ENCODE measurements at regions of chr9 and their contacts with region 1.

Region 1: DNA sequence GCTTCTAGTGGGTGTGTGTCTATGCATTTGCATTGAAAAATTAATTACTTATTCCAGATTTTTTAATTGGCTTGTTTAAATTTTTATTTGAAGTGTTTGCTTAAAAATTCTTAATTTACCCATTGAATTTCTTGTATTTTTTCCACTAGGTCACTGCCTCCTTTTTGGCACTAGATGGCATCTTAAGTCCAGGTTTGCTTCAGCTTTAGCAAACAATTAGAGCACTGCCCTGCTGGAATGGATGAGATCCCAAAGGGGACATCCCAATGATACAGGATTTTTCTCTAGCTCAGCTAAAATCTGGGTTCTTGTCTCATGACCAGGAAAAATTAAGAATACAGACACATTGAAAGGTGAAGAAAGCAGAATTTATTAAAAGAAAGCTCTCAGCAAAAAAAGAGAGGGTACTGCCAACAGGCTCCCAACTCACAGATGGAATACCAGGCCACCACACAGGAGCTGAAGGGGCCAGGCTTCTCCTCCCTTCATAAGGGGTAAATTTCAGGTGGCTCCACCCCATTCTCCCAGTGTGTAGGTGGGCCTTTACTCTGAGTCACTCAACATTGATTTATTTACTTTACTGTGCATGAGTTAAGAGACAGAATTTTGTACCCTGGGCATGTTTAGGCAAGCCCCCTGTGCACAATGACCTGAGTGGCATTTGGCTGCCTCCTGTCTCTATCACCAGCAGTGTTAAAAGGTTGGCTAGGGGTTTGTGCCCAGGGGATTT is 532.4 kb downstream of the ANXA1 start:
- DNase-seq: peak; percentile 69
- H3K4me3 Mint-ChIP-seq: no peak overlapping the region
- H3K27ac Mint-ChIP-seq: peak overlapping the region; percentile 40
- H3K4me1 Mint-ChIP-seq: peaks cover 13% of the 10 kb centered on the region
- H3K27me3 Mint-ChIP-seq: peaks cover 32% of the 10 kb centered on the region
- CTCF ChIP-seq: peak; percentile 89

Region 2: GRCh38 chr9:74006935-74007334 is 322.9 kb after region 1 on chr9:
- CTCF ChIA-PET with region 1: no interaction called
- POLR2A ChIA-PET with region 1: no interaction called
- intact Hi-C with region 1: loop called (anchors 1 kb)
- DNase-seq: peak; percentile 8
- H3K4me3 Mint-ChIP-seq: no peak overlapping the region
- H3K27ac Mint-ChIP-seq: no peak overlapping the region
- H3K4me1 Mint-ChIP-seq: no peaks in the 10 kb centered on the region
- H3K27me3 Mint-ChIP-seq: peaks cover 21% of the 10 kb centered on the region
- CTCF ChIP-seq: no peak

Region 3: DNA sequence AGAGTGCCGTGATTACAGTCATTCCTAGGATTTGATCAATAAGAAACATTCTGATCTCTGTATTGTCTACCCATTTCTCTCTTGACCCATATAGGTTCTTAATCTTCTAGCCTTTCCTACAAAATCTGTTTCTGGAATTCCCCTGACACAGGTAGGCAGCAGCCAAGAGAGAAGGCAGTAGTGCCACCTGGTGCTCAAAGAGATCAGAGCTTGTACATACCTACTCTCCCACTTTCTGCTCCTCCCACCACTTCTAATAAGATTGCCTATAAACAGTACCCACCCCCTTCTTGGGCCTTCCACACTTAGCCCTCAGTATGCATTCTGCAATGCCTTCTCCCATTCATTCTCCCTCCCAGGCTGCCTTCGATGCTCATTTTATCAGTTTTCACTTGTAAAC is 695.7 kb after region 1 on chr9:
- CTCF ChIA-PET with region 1: interaction called, 80 read pairs
- POLR2A ChIA-PET with region 1: interaction called, 3 read pairs
- intact Hi-C with region 1: loop called (anchors 1 kb)
- DNase-seq: peak; percentile 69
- H3K4me3 Mint-ChIP-seq: no peak overlapping the region
- H3K27ac Mint-ChIP-seq: no peak overlapping the region
- H3K4me1 Mint-ChIP-seq: no peaks in the 10 kb centered on the region
- H3K27me3 Mint-ChIP-seq: peaks cover 26% of the 10 kb centered on the region
- CTCF ChIP-seq: peak; percentile 43

Region 4: GRCh38 chr9:74570879-74571512 is 887.0 kb after region 1 on chr9:
- CTCF ChIA-PET with region 1: interaction called, 16 read pairs
- POLR2A ChIA-PET with region 1: no interaction called
- intact Hi-C with region 1: loop called (anchors 1 kb)
- DNase-seq: peak; percentile 33
- H3K4me3 Mint-ChIP-seq: no peak overlapping the region
- H3K27ac Mint-ChIP-seq: no peak overlapping the region
- H3K4me1 Mint-ChIP-seq: no peaks in the 10 kb centered on the region
- H3K27me3 Mint-ChIP-seq: peaks cover 51% of the 10 kb centered on the region
- CTCF ChIP-seq: peak; percentile 68

Region 5: GRCh38 chr9:74645007-74645639 is 961.1 kb after region 1 on chr9:
- CTCF ChIA-PET with region 1: interaction called, 3 read pairs
- POLR2A ChIA-PET with region 1: no interaction called
- intact Hi-C with region 1: loop called (anchors 1 kb)
- DNase-seq: peak; percentile 33
- H3K4me3 Mint-ChIP-seq: no peak overlapping the region
- H3K27ac Mint-ChIP-seq: no peak overlapping the region
- H3K4me1 Mint-ChIP-seq: no peaks in the 10 kb centered on the region
- H3K27me3 Mint-ChIP-seq: peaks cover 83% of the 10 kb centered on the region
- CTCF ChIP-seq: peak; percentile 64

Region 6: GRCh38 chr9:74742792-74743730 is 1059.0 kb after region 1 on chr9:
- CTCF ChIA-PET with region 1: interaction called, 4 read pairs
- POLR2A ChIA-PET with region 1: no interaction called
- intact Hi-C with region 1: loop called (anchors 2 kb)
- DNase-seq: peak; percentile 41
- H3K4me3 Mint-ChIP-seq: no peak overlapping the region
- H3K27ac Mint-ChIP-seq: no peak overlapping the region
- H3K4me1 Mint-ChIP-seq: peaks cover 5% of the 10 kb centered on the region
- H3K27me3 Mint-ChIP-seq: peaks cover 64% of the 10 kb centered on the region
- CTCF ChIP-seq: peak; percentile 81